ENCODE measurements at regions of chr11 and their contacts with region 1.

Region 1: GRCh38 chr11:95923728-95924413 is at the start of gene MTMR2:
- DNase-seq: peak; percentile 66
- H3K4me3 ChIP-seq: peak within 1 kb of the TSS; percentile 69 to 98 (median 70)
- H3K27ac ChIP-seq: peak within 1 kb of the TSS; percentile 90
- H3K4me1 ChIP-seq: peaks cover 8% of the 10 kb centered on the region
- H3K27me3 ChIP-seq: no peaks in the 10 kb centered on the region
- CTCF ChIP-seq: peak in 1 of 2 donors; percentile 2
- total RNA-seq, gene MTMR2: 47.2 to 50.7 TPM

Region 2: DNA sequence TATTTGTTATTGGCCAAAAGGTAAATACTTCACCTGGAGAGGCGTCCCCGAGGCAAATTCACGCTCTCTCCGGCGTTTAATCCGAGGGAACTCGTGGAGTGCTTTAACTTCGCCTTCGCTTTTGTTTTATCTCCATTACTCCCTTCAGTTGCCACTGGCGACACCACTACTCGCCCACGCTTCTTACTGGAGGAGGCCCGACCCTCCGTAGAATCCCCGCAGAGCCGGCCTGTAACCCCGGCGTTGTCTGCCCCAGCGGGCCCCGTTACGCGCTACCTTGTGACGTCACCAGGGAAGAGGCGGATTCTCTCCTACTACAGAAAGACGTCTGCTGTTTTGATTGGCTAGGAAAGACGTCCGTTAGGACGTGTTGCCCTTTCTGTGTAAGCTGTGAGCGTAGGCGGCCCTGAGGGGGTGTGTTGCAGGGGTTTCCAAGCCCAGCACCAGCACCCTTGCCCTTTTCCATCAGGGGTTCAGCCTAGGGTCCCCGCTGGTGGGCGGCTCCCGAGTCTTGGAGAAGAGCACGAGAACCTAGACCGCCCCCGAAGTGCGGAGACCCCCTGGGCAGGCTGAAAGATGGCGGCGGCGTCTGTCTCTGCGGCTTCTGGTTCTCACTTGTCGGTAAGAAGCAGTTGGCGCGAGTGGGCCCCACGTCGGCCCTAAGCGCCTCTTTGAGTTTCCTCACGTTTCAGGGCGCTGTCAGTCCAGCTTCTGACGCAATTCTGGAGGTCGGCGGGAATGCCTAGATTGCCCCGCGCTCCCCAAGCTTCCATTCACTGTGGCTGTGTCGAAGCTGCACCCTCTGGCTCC is 133.5 kb before region 1 on chr11 and contains the start of gene CEP57:
- CTCF ChIA-PET with region 1: no interaction called
- dilution Hi-C with region 1: no loop called
- in situ Hi-C with region 1: no loop called
- intact Hi-C with region 1: loop called (anchors 2 kb)
- DNase-seq: peak; percentile 97
- H3K4me3 ChIP-seq: peak within 1 kb of the TSS; percentile 73 to 98 (median 81)
- H3K27ac ChIP-seq: peak within 1 kb of the TSS; percentile 92
- H3K4me1 ChIP-seq: peaks cover 19% of the 10 kb centered on the region
- H3K27me3 ChIP-seq: no peaks in the 10 kb centered on the region
- CTCF ChIP-seq: no peak
- total RNA-seq, gene CEP57: 25.2 to 46.8 TPM

Region 3: DNA sequence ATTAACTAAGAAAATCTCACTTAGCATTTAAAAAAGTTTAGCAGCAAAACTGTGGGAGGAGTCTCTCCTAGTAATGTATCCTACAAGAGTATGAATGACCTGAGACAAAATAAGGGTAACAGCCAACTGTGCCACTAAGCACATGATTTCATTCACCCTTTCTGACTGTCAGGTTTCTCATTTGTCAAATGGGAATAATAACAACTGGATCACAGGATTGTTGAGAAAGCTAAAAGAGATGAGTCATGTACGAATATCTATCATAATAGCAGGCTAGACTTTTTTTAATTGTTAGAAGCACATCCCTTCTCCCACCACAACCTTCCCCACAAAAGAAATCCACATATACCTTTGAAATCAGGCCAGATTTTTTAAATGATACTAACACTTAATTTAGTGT is 39.5 kb before region 1 on chr11:
- CTCF ChIA-PET with region 1: no interaction called
- dilution Hi-C with region 1: no loop called
- in situ Hi-C with region 1: no loop called
- intact Hi-C with region 1: loop called (anchors 2 kb)
- DNase-seq: peak; percentile 79
- H3K4me3 ChIP-seq: no peak overlapping the region
- H3K27ac ChIP-seq: no peak overlapping the region
- H3K4me1 ChIP-seq: peaks cover 5% of the 10 kb centered on the region
- H3K27me3 ChIP-seq: no peaks in the 10 kb centered on the region
- CTCF ChIP-seq: no peak

Region 4: DNA sequence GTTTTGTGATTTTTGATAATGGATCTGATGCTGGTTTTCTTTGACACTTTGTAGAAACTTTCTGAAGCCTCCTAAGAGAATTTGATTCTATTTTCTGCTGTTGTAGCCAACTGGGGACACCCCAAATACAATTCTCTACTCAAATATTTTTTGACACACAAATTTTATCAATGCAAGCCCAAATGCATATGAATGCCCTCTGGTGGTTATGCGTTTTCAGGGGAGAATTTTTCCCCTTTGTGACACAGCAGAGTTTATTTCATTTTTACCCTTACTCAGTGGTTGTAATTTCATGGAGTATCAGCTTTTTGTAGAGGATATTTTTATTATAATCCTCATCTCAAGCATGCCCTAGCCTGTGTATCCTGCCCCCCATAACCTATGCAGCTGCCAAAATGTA is 44.7 kb after region 1 on chr11:
- CTCF ChIA-PET with region 1: no interaction called
- dilution Hi-C with region 1: no loop called
- in situ Hi-C with region 1: no loop called
- intact Hi-C with region 1: no loop called
- DNase-seq: no peak
- H3K4me3 ChIP-seq: no peak overlapping the region
- H3K27ac ChIP-seq: no peak overlapping the region
- H3K4me1 ChIP-seq: no peaks in the 10 kb centered on the region
- H3K27me3 ChIP-seq: no peaks in the 10 kb centered on the region
- CTCF ChIP-seq: peak; percentile 5 to 34